Calu3 (cell line): ENCODE measurements at regions of chr12 and their contacts with region 1.

Region 1: DNA sequence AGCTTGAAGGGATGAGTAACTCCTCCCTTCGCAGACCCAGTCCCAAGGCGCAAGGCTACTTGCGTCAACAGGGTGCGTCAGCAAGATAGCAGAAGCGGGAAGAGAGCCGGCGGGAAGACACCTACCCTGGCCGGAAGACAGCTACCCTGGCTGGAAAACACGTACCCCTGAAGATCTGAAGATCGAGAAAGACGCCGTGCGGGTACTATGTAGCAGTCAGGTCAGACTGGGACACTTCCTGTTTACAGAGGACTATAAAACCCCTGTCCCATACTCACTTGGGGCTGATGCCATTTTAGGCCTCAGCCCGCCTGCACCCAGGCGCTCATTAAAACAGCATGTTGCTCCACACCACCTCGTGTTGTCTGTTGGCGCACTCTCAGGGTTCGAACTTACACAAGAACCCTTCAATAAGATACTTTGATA is 80.9 kb downstream of the ABCD2 start:
- DNase-seq: no peak
- H3K4me3 Mint-ChIP-seq: no peak overlapping the region
- H3K27ac Mint-ChIP-seq: no peak overlapping the region
- H3K4me1 Mint-ChIP-seq: peaks cover 10% of the 10 kb centered on the region
- H3K27me3 Mint-ChIP-seq: no peaks in the 10 kb centered on the region
- CTCF ChIP-seq: no peak

Region 2: DNA sequence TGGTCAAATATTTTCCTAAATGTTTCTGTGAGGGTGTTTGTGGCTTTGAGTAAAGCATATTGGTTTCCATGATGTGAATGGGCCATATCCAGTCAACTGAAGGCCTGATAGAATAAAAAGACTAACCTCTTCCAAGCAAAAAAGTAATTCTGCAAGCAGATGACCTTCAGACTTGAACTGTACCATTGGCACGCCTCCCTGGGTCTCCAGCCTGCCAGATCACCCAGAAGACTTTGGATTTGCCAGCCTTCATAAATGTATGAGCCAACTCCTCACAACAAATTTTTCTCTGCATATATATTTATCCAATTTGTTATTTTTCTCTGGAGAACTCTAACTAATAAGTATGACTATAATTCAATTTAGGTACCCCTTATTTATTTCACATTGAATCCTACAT is 286.1 kb before region 1 on chr12:
- CTCF ChIA-PET with region 1: no interaction called
- intact Hi-C with region 1: no loop called
- DNase-seq: no peak
- H3K4me3 Mint-ChIP-seq: no peak overlapping the region
- H3K27ac Mint-ChIP-seq: no peak overlapping the region
- H3K4me1 Mint-ChIP-seq: no peaks in the 10 kb centered on the region
- H3K27me3 Mint-ChIP-seq: no peaks in the 10 kb centered on the region
- CTCF ChIP-seq: no peak

Region 3: DNA sequence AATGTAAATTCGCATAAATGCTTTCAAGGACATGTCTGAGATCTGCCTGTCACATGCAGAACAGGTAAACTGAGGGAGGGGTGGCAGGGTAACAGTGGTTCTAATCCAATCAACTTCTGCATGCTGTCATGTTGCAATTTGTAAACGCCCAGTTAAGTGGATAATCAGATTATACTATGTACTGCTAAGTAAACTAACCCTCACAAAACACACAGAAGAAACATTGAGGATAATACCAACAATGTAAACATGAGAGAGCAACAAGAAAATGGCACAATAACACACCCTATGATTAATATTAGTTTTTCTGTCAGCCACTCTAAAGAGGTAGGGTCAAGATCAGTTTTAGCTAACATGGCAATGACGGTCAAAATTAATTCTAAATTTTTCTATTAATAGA is 219.5 kb before region 1 on chr12:
- CTCF ChIA-PET with region 1: no interaction called
- intact Hi-C with region 1: loop called (anchors 10 kb)
- DNase-seq: no peak
- H3K4me3 Mint-ChIP-seq: no peak overlapping the region
- H3K27ac Mint-ChIP-seq: no peak overlapping the region
- H3K4me1 Mint-ChIP-seq: no peaks in the 10 kb centered on the region
- H3K27me3 Mint-ChIP-seq: no peaks in the 10 kb centered on the region
- CTCF ChIP-seq: no peak

Region 4: DNA sequence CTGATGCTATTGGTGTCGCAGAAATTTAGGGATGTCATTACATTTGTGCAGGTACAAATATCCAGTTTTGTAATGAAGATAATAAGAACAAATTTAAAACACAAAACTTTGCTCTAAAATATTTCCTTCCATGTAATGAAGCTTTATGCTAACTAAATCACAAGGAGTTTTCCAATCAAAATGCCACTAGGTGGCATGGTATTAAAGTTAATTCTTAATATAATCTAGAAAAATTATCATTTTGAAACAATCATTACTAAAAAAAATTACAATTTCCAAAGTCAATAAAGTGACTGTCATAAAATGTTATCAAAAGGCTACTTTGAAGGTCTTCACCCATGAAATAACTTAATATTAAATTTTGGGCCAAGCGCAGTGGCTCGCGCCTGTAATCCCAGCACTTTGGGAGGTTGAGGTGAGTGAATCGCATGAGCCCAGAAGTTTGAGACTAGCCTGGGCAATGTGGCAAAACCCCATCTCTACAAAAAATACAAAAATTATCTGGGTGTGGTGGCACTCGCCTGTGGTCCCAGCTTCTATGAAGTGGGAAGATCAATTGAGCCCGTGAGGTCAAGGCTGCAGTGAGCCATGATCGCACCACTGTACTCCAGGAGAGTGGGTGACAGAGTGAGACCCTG is 173.2 kb before region 1 on chr12:
- CTCF ChIA-PET with region 1: no interaction called
- intact Hi-C with region 1: loop called (anchors 10 kb)
- DNase-seq: no peak
- H3K4me3 Mint-ChIP-seq: no peak overlapping the region
- H3K27ac Mint-ChIP-seq: no peak overlapping the region
- H3K4me1 Mint-ChIP-seq: peaks cover 7% of the 10 kb centered on the region
- H3K27me3 Mint-ChIP-seq: no peaks in the 10 kb centered on the region
- CTCF ChIP-seq: no peak

Region 5: GRCh38 chr12:39574785-39575492 is 36.2 kb after region 1 on chr12:
- CTCF ChIA-PET with region 1: no interaction called
- intact Hi-C with region 1: no loop called
- DNase-seq: no peak
- H3K4me3 Mint-ChIP-seq: no peak overlapping the region
- H3K27ac Mint-ChIP-seq: peak overlapping the region; percentile 87
- H3K4me1 Mint-ChIP-seq: peaks cover 30% of the 10 kb centered on the region
- H3K27me3 Mint-ChIP-seq: no peaks in the 10 kb centered on the region
- CTCF ChIP-seq: no peak

Region 6: DNA sequence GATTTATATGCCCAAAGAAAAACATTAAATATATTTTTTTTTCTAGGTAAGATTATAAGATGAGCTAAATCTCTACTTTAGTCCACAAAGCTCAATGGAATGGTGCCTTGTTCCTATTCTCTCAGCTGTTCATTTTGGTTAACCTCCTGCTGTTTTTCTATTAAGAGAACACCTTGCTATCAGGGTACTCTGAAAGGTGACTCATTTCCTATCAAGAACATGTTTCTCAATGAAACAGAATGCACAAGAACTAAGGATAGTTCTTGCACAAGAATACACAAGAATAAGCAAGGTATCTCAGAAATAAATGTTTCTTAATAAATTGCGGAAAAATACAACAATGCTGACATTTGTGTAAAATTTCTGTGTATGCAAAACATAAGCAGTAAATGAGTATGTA is 66.8 kb after region 1 on chr12:
- CTCF ChIA-PET with region 1: no interaction called
- intact Hi-C with region 1: no loop called
- DNase-seq: no peak
- H3K4me3 Mint-ChIP-seq: no peak overlapping the region
- H3K27ac Mint-ChIP-seq: no peak overlapping the region
- H3K4me1 Mint-ChIP-seq: peaks cover 14% of the 10 kb centered on the region
- H3K27me3 Mint-ChIP-seq: no peaks in the 10 kb centered on the region
- CTCF ChIP-seq: no peak

Region 7: DNA sequence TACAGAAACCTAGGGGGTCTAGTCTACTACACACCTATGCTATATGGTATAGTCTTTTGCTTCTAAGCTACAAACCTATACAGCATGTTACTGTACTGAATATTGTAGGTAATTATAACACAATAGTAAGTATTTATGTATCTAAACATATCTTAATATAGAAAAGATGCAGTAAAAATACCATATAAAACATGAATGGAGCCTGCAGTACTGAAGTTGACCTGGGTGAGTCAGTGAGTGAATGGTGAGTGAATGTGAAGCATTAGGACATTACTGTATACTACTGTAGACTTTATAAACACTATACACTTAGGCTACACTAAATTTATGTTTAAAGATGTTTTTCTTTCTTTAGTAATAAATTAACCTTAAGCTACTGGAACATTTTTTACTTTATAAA is 94.0 kb after region 1 on chr12:
- CTCF ChIA-PET with region 1: no interaction called
- intact Hi-C with region 1: loop called (anchors 10 kb)
- DNase-seq: no peak
- H3K4me3 Mint-ChIP-seq: no peak overlapping the region
- H3K27ac Mint-ChIP-seq: no peak overlapping the region
- H3K4me1 Mint-ChIP-seq: no peaks in the 10 kb centered on the region
- H3K27me3 Mint-ChIP-seq: no peaks in the 10 kb centered on the region
- CTCF ChIP-seq: no peak

Region 8: GRCh38 chr12:39692258-39692853 is 153.7 kb after region 1 on chr12:
- CTCF ChIA-PET with region 1: no interaction called
- intact Hi-C with region 1: loop called (anchors 5 kb)
- DNase-seq: no peak
- H3K4me3 Mint-ChIP-seq: no peak overlapping the region
- H3K27ac Mint-ChIP-seq: no peak overlapping the region
- H3K4me1 Mint-ChIP-seq: no peaks in the 10 kb centered on the region
- H3K27me3 Mint-ChIP-seq: no peaks in the 10 kb centered on the region
- CTCF ChIP-seq: no peak